CD4-positive, alpha-beta T cell (primary cell): ENCODE measurements at regions of chr7 and their contacts with region 1.

Region 1: GRCh38 chr7:90155206-90155605 is 937 bp downstream of the STEAP1 start:
- DNase-seq: no peak
- ATAC-seq: no peak
- H3K4me3 ChIP-seq: no peak overlapping the region
- H3K4me3 Mint-ChIP-seq: no peak overlapping the region
- H3K27ac ChIP-seq: no peak overlapping the region
- H3K27ac Mint-ChIP-seq: no peak overlapping the region
- H3K4me1 ChIP-seq: peaks cover 9% of the 10 kb centered on the region
- H3K4me1 Mint-ChIP-seq: peaks cover 4% of the 10 kb centered on the region
- H3K27me3 ChIP-seq: peaks cover 0 to 7% of the 10 kb centered on the region in 2 experiments
- H3K27me3 Mint-ChIP-seq: peaks cover 47% of the 10 kb centered on the region
- CTCF ChIP-seq: no peak

Region 2: GRCh38 chr7:90173127-90173844 is 18.1 kb after region 1 on chr7:
- CTCF ChIA-PET with region 1: no interaction called
- POLR2A ChIA-PET with region 1: no interaction called
- intact Hi-C with region 1: no loop called
- DNase-seq: no peak
- ATAC-seq: no peak
- H3K4me3 ChIP-seq: no peak overlapping the region
- H3K4me3 Mint-ChIP-seq: no peak overlapping the region
- H3K27ac ChIP-seq: no peak overlapping the region
- H3K27ac Mint-ChIP-seq: no peak overlapping the region
- H3K4me1 ChIP-seq: no peaks in the 10 kb centered on the region
- H3K4me1 Mint-ChIP-seq: no peaks in the 10 kb centered on the region
- H3K27me3 ChIP-seq: peaks cover 0 to 7% of the 10 kb centered on the region in 2 experiments
- H3K27me3 Mint-ChIP-seq: peaks cover 34% of the 10 kb centered on the region
- CTCF ChIP-seq: no peak

Region 3: GRCh38 chr7:90262438-90262837 is 107.2 kb after region 1 on chr7:
- CTCF ChIA-PET with region 1: interaction called, 3 read pairs
- POLR2A ChIA-PET with region 1: no interaction called
- intact Hi-C with region 1: loop called in 1 of 2 experiments (anchors 2 kb)
- DNase-seq: peak in 3 of 14 experiments; percentile 8 to 20 (median 13)
- ATAC-seq: peak; percentile 49
- H3K4me3 ChIP-seq: no peak overlapping the region
- H3K4me3 Mint-ChIP-seq: no peak overlapping the region
- H3K27ac ChIP-seq: no peak overlapping the region
- H3K27ac Mint-ChIP-seq: no peak overlapping the region
- H3K4me1 ChIP-seq: no peaks in the 10 kb centered on the region
- H3K4me1 Mint-ChIP-seq: no peaks in the 10 kb centered on the region
- H3K27me3 ChIP-seq: peaks cover 0 to 4% of the 10 kb centered on the region in 2 experiments
- H3K27me3 Mint-ChIP-seq: peaks cover 42% of the 10 kb centered on the region
- CTCF ChIP-seq: peak; percentile 43